Dorsolateral prefrontal cortex (tissue), 120 donors: ENCODE measurements at regions of chr16 and their contacts with region 1.

Region 1: DNA sequence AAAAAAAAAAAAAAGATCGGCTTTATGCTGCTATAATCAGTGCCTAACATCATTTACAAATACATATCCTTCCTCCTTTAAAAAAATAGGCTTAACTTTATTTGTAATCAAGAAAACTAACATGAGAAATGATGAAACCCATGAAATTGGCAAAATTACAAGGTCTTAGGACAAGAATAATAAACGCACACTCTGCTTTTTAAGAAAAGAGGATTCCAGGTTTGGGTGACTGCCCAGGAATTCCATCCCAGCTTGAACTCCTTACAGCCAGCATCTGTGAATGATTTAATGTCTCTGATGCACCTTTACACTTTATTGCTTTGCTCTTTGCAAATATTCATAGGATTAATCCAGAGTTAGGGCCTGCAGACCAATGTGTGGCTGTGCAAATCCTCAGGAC is 196.0 kb downstream of the CBLN1 start:
- DNase-seq: no peak
- H3K4me3 ChIP-seq: no peak overlapping the region
- H3K27ac ChIP-seq: no peak overlapping the region
- H3K27me3 ChIP-seq: peaks cover 0 to 9% (median 0%) of the 10 kb centered on the region in 45 donors
- CTCF ChIP-seq: no peak

Region 2: DNA sequence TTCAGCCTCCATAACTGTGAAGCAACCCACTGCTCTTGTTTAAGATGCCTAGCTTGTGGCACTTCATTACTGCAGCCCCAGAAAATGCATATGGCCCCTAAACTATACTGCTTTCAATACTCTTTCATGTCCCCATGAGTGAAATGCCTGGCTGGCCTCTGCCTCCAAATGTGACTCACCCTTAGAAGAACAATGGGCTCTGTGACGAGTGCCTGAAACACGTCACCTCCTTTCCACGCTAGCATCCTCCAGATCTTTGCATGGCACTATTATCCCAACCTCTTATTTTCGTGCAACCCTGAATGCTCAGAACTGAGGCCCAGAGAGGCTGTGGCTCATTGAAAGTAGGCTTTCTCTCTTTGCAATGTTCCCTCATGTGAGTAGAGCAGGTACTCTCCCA is 37.1 kb before region 1 on chr16:
- intact Hi-C with region 1: loop called in 1 of 2 experiments (anchors 2 kb)
- DNase-seq: peak in 7 of 10 donors; percentile 41 to 70 (median 62)
- H3K4me3 ChIP-seq: peak overlapping the region in 5 of 59 donors; percentile 1 to 38 (median 20)
- H3K27ac ChIP-seq: peak overlapping the region in 54 of 59 donors; percentile 34 to 92 (median 78)
- H3K27me3 ChIP-seq: peaks cover 0 to 12% (median 0%) of the 10 kb centered on the region in 45 donors
- CTCF ChIP-seq: no peak

Region 3: DNA sequence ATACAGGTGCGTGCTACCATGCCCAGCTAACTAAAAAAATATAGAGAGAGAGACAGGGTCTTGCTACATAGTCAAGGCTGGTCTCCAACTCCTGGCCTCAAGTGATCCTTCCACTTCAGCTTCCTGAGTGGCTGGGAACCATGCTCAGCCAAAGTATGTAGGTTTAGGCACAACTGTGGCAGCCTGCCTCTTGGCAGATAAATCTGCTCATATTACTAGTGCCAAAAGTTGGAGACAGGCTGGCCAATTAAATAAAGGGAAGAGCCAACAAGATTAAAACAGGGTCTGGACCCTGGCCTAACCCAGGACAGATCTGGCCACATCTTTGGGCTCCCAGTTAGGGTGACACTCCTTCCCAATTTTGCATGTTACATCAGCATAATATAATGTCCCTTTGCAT is 44.2 kb after region 1 on chr16:
- intact Hi-C with region 1: no loop called
- DNase-seq: peak in 1 of 10 donors; percentile 44
- H3K4me3 ChIP-seq: no peak overlapping the region
- H3K27ac ChIP-seq: no peak overlapping the region
- H3K27me3 ChIP-seq: peaks cover 0 to 37% (median 5%) of the 10 kb centered on the region in 45 donors
- CTCF ChIP-seq: no peak